Sigmoid colon (tissue), 7 donors: ENCODE measurements at regions of chr9 and their contacts with region 1.

Region 1: DNA sequence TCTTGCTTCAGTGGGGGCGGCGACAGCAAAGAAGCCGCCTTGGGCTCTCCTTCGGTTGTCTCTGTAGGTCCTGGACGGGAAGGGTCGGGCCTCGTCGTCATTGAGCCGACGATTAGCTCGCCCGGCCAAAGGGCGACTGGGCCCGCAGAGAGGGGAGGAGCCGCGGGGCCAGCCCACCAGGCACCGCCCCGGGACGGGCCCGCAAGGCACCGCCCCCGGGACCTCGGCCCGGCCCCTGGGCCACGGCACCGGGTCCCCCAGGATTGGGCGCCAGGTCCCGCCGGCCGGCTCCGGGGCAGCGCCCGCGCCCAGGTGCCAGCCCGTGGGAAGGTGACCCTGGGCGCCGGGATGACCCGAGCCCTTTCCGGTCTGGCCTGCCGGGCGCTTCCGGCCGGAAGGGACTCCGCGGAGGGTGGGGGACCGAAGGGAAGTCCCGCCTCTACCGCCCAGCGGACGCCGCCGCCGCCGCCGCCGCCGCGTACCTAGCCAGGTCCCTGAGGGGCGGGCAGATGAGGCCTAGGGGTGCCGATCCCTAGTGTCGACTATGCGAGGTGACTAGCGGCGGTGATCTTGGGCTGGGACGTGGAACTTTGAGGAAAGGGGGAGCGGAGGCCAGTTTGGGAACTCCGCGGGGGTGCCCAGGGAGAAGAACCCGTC is at the starts of genes GBA2 and RGP1:
- DNase-seq: peak; percentile 92
- H3K4me3 ChIP-seq: peak within 1 kb of the TSS; percentile 87 to 97 (median 89)
- H3K27ac ChIP-seq: peak within 1 kb of the TSS; percentile 90 to 97 (median 92)
- H3K4me1 ChIP-seq: peaks cover 0 to 58% (median 56%) of the 10 kb centered on the region in 4 donors
- H3K27me3 ChIP-seq: no peaks in the 10 kb centered on the region
- CTCF ChIP-seq: no peak
- EP300 ChIP-seq: no peak
- POLR2A ChIP-seq: peak; percentile 34 to 62
- total RNA-seq, gene GBA2: 45.9 to 91.7 (median 64.8) TPM
- total RNA-seq, gene RGP1: 13.3 to 23.5 (median 13.5) TPM

Region 2: DNA sequence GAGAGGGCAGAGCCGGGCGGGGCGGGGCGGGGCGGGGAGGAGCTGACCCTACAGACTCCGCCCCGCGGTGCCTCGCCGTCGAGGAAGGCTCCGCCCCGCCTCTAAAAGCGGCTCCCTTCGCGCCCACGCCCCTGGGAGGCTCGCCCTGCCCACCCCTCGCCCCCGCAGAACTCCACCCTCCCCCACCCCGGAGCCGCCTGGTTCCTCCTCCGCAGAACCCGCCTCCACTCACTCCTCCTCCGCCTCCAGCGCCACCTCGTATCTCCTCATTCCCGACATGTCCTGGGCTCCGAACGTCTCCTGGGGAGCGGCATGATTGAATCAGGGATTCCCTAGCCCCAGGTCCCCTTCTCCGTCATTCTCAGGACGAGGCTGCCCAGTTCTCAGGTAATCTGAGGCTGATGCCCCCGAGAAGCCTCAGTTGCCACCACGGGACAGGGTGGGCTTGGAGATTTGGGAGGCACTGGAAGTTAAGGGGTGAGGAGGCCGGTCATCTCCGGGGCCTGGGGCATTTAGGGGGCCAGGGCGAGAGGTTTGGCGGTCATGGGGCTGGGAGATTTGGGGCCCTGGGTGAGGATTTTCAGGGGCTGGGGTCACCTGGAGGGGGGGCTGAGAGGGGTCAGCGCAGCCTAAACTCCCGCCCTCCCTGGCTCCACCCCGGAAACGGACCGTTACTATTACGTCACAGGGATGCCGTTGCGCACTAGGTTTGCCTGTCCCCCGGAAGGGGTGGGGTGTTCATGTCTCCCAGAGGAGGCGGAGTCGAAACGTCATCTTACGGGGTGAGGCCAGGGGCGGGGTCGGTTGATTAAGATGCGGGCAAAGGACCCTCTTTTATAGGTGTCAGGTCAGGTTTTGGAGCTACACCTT is 1083.4 kb before region 1 on chr9:
- intact Hi-C with region 1: loop called (anchors 10 kb)
- DNase-seq: peak; percentile 99
- H3K4me3 ChIP-seq: peak overlapping the region; percentile 72 to 81 (median 78)
- H3K27ac ChIP-seq: peak overlapping the region; percentile 96 to 100 (median 100)
- H3K4me1 ChIP-seq: peaks cover 0 to 25% (median 19%) of the 10 kb centered on the region in 4 donors
- H3K27me3 ChIP-seq: no peaks in the 10 kb centered on the region
- CTCF ChIP-seq: no peak
- EP300 ChIP-seq: peak in 2 of 4 donors; percentile 10 to 48
- POLR2A ChIP-seq: peak; percentile 92 to 94

Region 3: GRCh38 chr9:35646533-35647265 is 102.3 kb before region 1 on chr9:
- intact Hi-C with region 1: loop called (anchors 5 kb)
- DNase-seq: peak; percentile 96
- H3K4me3 ChIP-seq: peak overlapping the region; percentile 38 to 63 (median 56)
- H3K27ac ChIP-seq: peak overlapping the region; percentile 77 to 90 (median 87)
- H3K4me1 ChIP-seq: peaks cover 0 to 13% (median 11%) of the 10 kb centered on the region in 4 donors
- H3K27me3 ChIP-seq: no peaks in the 10 kb centered on the region
- CTCF ChIP-seq: peak; percentile 93 to 98 (median 95)
- EP300 ChIP-seq: peak in 1 of 4 donors; percentile 10
- POLR2A ChIP-seq: peak; percentile 86 to 91

Region 4: GRCh38 chr9:35705836-35706430 is 43.1 kb before region 1 on chr9:
- intact Hi-C with region 1: no loop called
- DNase-seq: no peak
- H3K4me3 ChIP-seq: no peak overlapping the region
- H3K27ac ChIP-seq: peak overlapping the region; percentile 30 to 49 (median 38)
- H3K4me1 ChIP-seq: no peaks in the 10 kb centered on the region
- H3K27me3 ChIP-seq: no peaks in the 10 kb centered on the region
- CTCF ChIP-seq: no peak
- EP300 ChIP-seq: no peak
- POLR2A ChIP-seq: no peak

Region 5: DNA sequence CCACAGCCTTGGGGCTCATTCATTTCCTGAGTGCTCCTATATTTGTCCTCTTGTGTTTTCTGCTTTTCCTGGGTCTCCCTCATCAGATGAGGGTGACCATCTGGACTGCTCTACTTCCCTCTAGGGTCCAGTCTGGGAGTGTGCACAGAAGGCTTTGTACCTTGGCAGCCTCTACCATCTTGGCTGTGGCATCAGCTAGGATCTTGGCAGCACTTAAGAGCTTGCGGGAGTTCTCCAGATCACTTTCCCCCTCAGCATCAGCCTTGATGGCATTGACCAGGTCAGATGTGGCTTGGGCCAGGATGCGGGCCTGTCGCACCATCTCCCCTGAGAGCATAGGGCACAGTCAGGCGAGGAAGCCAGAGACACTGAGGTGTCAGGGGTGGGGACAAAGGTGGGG is 32.8 kb before region 1 on chr9:
- intact Hi-C with region 1: no loop called
- DNase-seq: peak; percentile 74
- H3K4me3 ChIP-seq: no peak overlapping the region
- H3K27ac ChIP-seq: peak overlapping the region; percentile 50 to 69 (median 59)
- H3K4me1 ChIP-seq: peaks cover 0 to 6% (median 0%) of the 10 kb centered on the region in 4 donors
- H3K27me3 ChIP-seq: no peaks in the 10 kb centered on the region
- CTCF ChIP-seq: peak in 1 of 4 experiments; percentile 34
- EP300 ChIP-seq: no peak
- POLR2A ChIP-seq: no peak

Region 6: GRCh38 chr9:35814841-35815543 is 66.0 kb after region 1 on chr9 and contains the start of gene HINT2:
- intact Hi-C with region 1: loop called (anchors 5 kb)
- DNase-seq: peak; percentile 99
- H3K4me3 ChIP-seq: peak within 1 kb of the TSS; percentile 82 to 99 (median 98)
- H3K27ac ChIP-seq: peak within 1 kb of the TSS; percentile 98 to 100 (median 98)
- H3K4me1 ChIP-seq: peaks cover 0 to 36% (median 32%) of the 10 kb centered on the region in 4 donors
- H3K27me3 ChIP-seq: no peaks in the 10 kb centered on the region
- CTCF ChIP-seq: peak in 1 of 4 experiments; percentile 9
- EP300 ChIP-seq: no peak
- POLR2A ChIP-seq: peak; percentile 92 to 93
- total RNA-seq, gene HINT2: 23.5 to 42.8 (median 36.2) TPM